Activated CD4-positive, alpha-beta T cell treated with anti-CD3 and anti-CD28 coated beads for 36 hours (primary cell): ENCODE measurements at regions of chr5 and their contacts with region 1.

Region 1: GRCh38 chr5:132639706-132640130 is 18.3 kb upstream of the IL13 start:
- DNase-seq: peak; percentile 44
- ATAC-seq: peak; percentile 3
- H3K4me3 Mint-ChIP-seq: no peak overlapping the region
- H3K27ac Mint-ChIP-seq: no peak overlapping the region
- H3K4me1 Mint-ChIP-seq: peaks cover 71% of the 10 kb centered on the region
- H3K27me3 Mint-ChIP-seq: no peaks in the 10 kb centered on the region

Region 2: DNA sequence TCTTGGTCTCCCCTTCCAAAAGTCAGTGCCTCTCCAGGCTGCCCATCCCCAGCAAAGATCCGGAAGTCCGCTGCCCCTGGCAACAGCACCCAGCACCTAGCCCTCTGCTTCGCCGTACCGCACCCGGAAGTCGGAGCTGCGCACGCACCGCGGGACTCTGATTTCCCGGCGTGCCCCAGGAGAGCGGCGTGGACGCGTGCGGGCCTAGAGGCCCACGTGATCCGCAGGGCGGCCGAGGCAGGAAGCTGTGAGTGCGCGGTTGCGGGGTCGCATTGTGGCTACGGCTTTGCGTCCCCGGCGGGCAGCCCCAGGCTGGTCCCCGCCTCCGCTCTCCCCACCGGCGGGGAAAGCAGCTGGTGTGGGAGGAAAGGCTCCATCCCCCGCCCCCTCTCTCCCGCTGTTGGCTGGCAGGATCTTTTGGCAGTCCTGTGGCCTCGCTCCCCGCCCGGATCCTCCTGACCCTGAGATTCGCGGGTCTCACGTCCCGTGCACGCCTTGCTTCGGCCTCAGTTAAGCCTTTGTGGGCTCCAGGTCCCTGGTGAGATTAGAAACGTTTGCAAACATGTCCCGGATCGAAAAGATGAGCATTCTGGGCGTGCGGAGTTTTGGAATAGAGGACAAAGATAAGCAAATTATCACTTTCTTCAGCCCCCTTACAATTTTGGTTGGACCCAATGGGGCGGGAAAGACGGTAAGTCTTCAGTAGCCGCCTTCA is 82.8 kb before region 1 on chr5 and contains the start of gene RAD50:
- CTCF ChIA-PET with region 1: no interaction called
- POLR2A ChIA-PET with region 1: no interaction called
- intact Hi-C with region 1: loop called in 1 of 2 experiments (anchors 5 kb)
- DNase-seq: peak; percentile 96
- ATAC-seq: peak; percentile 99
- H3K4me3 Mint-ChIP-seq: peak within 1 kb of the TSS; percentile 96
- H3K27ac Mint-ChIP-seq: peak within 1 kb of the TSS; percentile 98
- H3K4me1 Mint-ChIP-seq: peaks cover 21% of the 10 kb centered on the region
- H3K27me3 Mint-ChIP-seq: no peaks in the 10 kb centered on the region
- total RNA-seq, gene RAD50: 46.0 to 51.3 TPM

Region 3: DNA sequence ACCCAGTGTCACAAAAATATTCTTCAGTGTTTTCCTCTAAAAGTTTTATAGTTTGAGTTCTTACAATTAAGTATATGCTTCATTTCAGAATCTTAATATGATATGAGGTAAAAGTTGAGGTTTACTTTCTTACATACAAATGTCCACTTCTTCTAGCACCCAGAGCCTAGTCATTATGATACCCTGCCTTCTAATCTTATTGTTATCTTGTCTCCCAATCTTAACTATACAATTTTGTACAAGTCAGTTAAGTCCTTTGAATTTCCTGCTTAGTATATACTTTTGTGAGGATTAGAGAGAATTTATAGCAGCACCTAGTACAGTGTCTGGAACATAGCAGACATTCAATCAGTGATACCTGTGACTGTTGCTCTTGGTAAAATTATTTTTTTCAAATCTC is 53.7 kb before region 1 on chr5:
- CTCF ChIA-PET with region 1: no interaction called
- POLR2A ChIA-PET with region 1: no interaction called
- intact Hi-C with region 1: no loop called
- DNase-seq: no peak
- ATAC-seq: no peak
- H3K4me3 Mint-ChIP-seq: no peak overlapping the region
- H3K27ac Mint-ChIP-seq: no peak overlapping the region
- H3K4me1 Mint-ChIP-seq: peaks cover 3% of the 10 kb centered on the region
- H3K27me3 Mint-ChIP-seq: no peaks in the 10 kb centered on the region

Region 4: DNA sequence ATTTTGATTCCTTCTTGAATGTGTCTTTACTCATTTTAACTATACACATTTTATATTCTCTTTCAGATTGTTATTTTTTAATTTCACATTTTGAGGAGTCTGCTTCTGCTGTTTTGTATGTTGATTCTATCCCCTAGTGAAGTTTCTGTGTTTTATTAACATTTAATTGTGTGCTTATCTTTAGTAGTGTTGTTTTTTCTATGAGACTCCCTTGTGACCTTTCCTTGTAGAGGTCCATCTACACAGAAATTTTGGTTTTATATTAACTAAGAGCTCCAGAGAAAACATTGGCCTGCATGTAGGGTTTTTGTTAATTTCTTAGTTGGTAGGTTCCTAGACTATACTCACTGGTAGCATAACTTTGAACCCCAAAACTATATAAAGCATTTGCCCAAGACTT is 17.1 kb before region 1 on chr5:
- CTCF ChIA-PET with region 1: interaction called, 3 read pairs
- POLR2A ChIA-PET with region 1: no interaction called
- intact Hi-C with region 1: loop called (anchors 1 kb)
- DNase-seq: no peak
- ATAC-seq: no peak
- H3K4me3 Mint-ChIP-seq: no peak overlapping the region
- H3K27ac Mint-ChIP-seq: no peak overlapping the region
- H3K4me1 Mint-ChIP-seq: peaks cover 13% of the 10 kb centered on the region
- H3K27me3 Mint-ChIP-seq: no peaks in the 10 kb centered on the region

Region 5: GRCh38 chr5:132688536-132689339 is 49.0 kb after region 1 on chr5:
- CTCF ChIA-PET with region 1: interaction called, 9 read pairs
- POLR2A ChIA-PET with region 1: no interaction called
- intact Hi-C with region 1: loop called (anchors 1 kb)
- DNase-seq: peak; percentile 51
- ATAC-seq: peak; percentile 77
- H3K4me3 Mint-ChIP-seq: no peak overlapping the region
- H3K27ac Mint-ChIP-seq: peak overlapping the region; percentile 76
- H3K4me1 Mint-ChIP-seq: peaks cover 37% of the 10 kb centered on the region
- H3K27me3 Mint-ChIP-seq: no peaks in the 10 kb centered on the region

Region 6: GRCh38 chr5:132736853-132737833 is 97.4 kb after region 1 on chr5 and contains the start of gene KIF3A:
- CTCF ChIA-PET with region 1: interaction called, 8 read pairs
- POLR2A ChIA-PET with region 1: interaction called, 3 read pairs
- intact Hi-C with region 1: loop called in 1 of 2 experiments (anchors 2 kb)
- DNase-seq: peak; percentile 99
- ATAC-seq: peak; percentile 94
- H3K4me3 Mint-ChIP-seq: peak within 1 kb of the TSS; percentile 77
- H3K27ac Mint-ChIP-seq: peak within 1 kb of the TSS; percentile 70
- H3K4me1 Mint-ChIP-seq: peaks cover 30% of the 10 kb centered on the region
- H3K27me3 Mint-ChIP-seq: no peaks in the 10 kb centered on the region
- total RNA-seq, gene KIF3A: 7.1 to 10.6 TPM